ENCODE measurements at regions of chr6 and their contacts with region 1.

Region 1: GRCh38 chr6:129661536-129662405 is 48.2 kb downstream of the ARHGAP18 start:
- DNase-seq: no peak
- ATAC-seq: no peak; the same call in 1 of the 2 replicates
- H3K4me3 ChIP-seq: no peak overlapping the region
- H3K27ac ChIP-seq: no peak overlapping the region
- H3K4me1 ChIP-seq: no peaks in the 10 kb centered on the region
- H3K27me3 ChIP-seq: no peaks in the 10 kb centered on the region
- CTCF ChIP-seq: no peak
- POLR2A ChIP-seq: no peak
- RAD21 ChIP-seq: no peak

Region 2: GRCh38 chr6:129818251-129818650 is 156.5 kb after region 1 on chr6:
- CTCF ChIA-PET with region 1: no interaction called
- POLR2A ChIA-PET with region 1: no interaction called
- dilution Hi-C with region 1: no loop called
- in situ Hi-C with region 1: no loop called
- intact Hi-C with region 1: no loop called
- DNase-seq: no peak
- ATAC-seq: no peak
- H3K4me3 ChIP-seq: no peak overlapping the region
- H3K27ac ChIP-seq: no peak overlapping the region
- H3K4me1 ChIP-seq: no peaks in the 10 kb centered on the region
- H3K27me3 ChIP-seq: no peaks in the 10 kb centered on the region; the same call in 1 of the 2 replicates
- CTCF ChIP-seq: no peak
- POLR2A ChIP-seq: no peak
- RAD21 ChIP-seq: no peak

Region 3: GRCh38 chr6:129860908-129861665 is 199.3 kb after region 1 on chr6 and contains the start of gene TMEM244:
- CTCF ChIA-PET with region 1: no interaction called
- POLR2A ChIA-PET with region 1: interaction called, 17 read pairs
- dilution Hi-C with region 1: no loop called
- in situ Hi-C with region 1: no loop called
- intact Hi-C with region 1: no loop called
- DNase-seq: peak; percentile 70
- ATAC-seq: peak; percentile 43
- H3K4me3 ChIP-seq: no peak within 1 kb of the TSS; the same call in 1 of the 2 replicates
- H3K27ac ChIP-seq: peak within 1 kb of the TSS; percentile 7; the same call in 1 of the 2 replicates
- H3K4me1 ChIP-seq: peaks cover 10% of the 10 kb centered on the region
- H3K27me3 ChIP-seq: no peaks in the 10 kb centered on the region
- CTCF ChIP-seq: no peak
- POLR2A ChIP-seq: no peak
- RAD21 ChIP-seq: no peak
- total RNA-seq, gene TMEM244: 0.28 and 0.36 TPM in 2 replicates